ENCODE measurements at regions of chr5 and their contacts with region 1.

Region 1: DNA sequence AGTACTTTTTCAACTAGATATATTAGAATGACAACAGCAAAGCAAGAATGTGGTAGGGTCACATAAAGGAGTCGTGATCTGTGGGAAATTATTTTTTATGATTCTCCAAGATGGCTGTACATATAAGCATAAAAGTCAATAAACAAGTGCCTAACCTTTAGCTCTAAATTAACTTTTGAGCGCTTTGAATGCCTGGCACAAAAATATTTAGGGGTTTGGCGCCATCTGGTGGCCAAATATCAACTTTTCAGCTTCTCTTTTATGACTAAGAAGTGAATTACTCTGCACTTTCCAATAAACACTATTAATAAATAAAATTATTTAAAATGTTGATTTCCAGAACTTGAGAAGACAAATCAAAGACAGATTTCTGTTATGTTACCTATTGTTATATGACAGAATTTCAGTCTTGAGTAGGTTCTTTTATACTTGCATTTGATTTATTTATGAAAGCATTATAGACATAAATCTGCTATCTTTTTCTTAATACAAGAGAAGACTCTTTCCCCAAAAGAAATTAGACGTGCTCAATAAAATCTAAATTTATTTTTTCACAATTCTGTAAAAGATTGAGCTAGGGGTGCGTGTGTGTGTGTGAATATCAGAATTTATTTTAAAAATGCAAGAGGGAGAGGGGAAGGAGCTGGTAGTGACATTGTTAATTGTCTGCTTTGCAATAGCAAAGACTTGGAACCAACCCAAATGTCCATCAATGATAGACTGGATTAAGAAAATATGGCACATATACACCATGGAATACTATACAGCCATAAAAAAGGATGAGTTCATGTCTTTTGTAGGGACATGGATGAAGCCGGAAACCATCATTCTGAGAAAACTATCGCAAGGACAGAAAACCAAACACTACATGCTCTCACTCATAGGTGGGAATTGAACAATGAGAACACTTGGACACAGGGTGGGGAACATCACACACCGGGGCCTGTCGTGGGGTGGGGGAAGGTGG is 36.7 kb upstream of the ARRDC3 start:
- DNase-seq: peak in 5 of 6 donors; percentile 13 to 63 (median 38)
- ATAC-seq: peak in 3 of 4 donors; percentile 72 to 77 (median 73)
- H3K4me3 ChIP-seq: no peak overlapping the region
- H3K27ac ChIP-seq: no peak overlapping the region
- H3K4me1 ChIP-seq: no peaks in the 10 kb centered on the region
- H3K27me3 ChIP-seq: no peaks in the 10 kb centered on the region
- CTCF ChIP-seq: peak; percentile 65 to 79 (median 72)

Region 2: GRCh38 chr5:90866333-90866732 is 553.5 kb before region 1 on chr5:
- intact Hi-C with region 1: loop called in 1 of 3 experiments (anchors 10 kb)
- DNase-seq: no peak
- ATAC-seq: peak; percentile 71 to 92 (median 88)
- H3K4me3 ChIP-seq: no peak overlapping the region
- H3K27ac ChIP-seq: no peak overlapping the region
- H3K4me1 ChIP-seq: peaks cover 0 to 9% (median 0%) of the 10 kb centered on the region in 3 donors
- H3K27me3 ChIP-seq: no peaks in the 10 kb centered on the region
- CTCF ChIP-seq: peak in 3 of 4 donors; percentile 8 to 43 (median 24)

Measured in pancreas (tissue), 10 donors.